GM12878 (cell line): ENCODE measurements at regions of chr2 and their contacts with region 1.

Region 1: GRCh38 chr2:31170071-31170698 is 31.9 kb upstream of the GALNT14 start:
- DNase-seq: peak; percentile 21
- ATAC-seq: peak; percentile 94
- H3K4me3 ChIP-seq: no peak overlapping the region
- H3K27ac ChIP-seq: no peak overlapping the region
- H3K4me1 ChIP-seq: no peaks in the 10 kb centered on the region
- H3K27me3 ChIP-seq: no peaks in the 10 kb centered on the region
- CTCF ChIP-seq: peak; percentile 93 to 97 (median 95)
- EP300 ChIP-seq: no peak
- POLR2A ChIP-seq: no peak
- RAD21 ChIP-seq: peak; percentile 85

Region 2: DNA sequence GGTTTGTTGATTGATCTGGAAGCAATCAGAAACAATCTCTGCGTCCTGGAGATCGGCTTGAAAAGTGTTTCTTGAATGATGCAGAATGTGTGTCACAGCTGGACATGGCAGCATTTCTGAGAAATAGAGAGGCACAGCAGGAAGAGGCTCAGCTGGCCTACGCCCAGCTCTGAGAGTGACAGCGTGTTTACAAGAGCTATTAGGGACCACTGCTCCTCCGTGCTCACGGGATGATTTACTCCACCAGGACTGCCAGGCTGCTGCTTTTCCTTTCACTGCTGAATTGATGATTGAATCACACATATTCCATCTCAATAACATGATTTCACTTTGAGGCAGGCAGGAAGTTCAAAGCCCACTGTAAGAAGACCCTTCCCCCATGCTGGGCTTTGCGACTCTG is 94.7 kb before region 1 on chr2:
- CTCF ChIA-PET with region 1: no interaction called
- POLR2A ChIA-PET with region 1: no interaction called
- RAD21 ChIA-PET with region 1: no interaction called
- SMC1A ChIA-PET with region 1: no interaction called
- in situ Hi-C with region 1: no loop called
- intact Hi-C with region 1: no loop called
- DNase-seq: no peak
- ATAC-seq: no peak
- H3K4me3 ChIP-seq: no peak overlapping the region
- H3K27ac ChIP-seq: no peak overlapping the region
- H3K4me1 ChIP-seq: no peaks in the 10 kb centered on the region
- H3K27me3 ChIP-seq: no peaks in the 10 kb centered on the region
- CTCF ChIP-seq: no peak
- EP300 ChIP-seq: no peak
- POLR2A ChIP-seq: no peak
- RAD21 ChIP-seq: no peak

Region 3: DNA sequence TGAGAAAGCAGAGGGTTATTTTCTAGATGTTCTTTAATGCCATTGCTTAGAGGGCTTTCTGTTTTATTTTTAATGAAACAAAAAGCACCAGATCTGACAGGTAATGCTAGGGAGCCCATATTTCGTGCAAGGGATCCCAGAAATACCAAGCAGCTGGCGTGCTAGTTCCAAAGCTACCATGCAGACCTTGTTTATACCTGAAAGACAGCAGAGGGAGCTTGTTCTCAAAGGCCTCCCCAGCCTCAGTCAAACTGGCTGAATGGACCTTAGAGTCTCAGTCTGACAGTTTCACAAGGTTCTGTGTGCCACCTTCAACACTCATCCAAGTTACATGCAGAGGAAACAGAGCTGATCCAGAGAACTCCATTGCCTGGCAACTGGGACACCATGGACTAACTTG is 80.5 kb before region 1 on chr2:
- CTCF ChIA-PET with region 1: interaction called, 4 read pairs
- POLR2A ChIA-PET with region 1: no interaction called
- RAD21 ChIA-PET with region 1: no interaction called
- SMC1A ChIA-PET with region 1: interaction called, 13 read pairs
- in situ Hi-C with region 1: no loop called
- intact Hi-C with region 1: no loop called
- DNase-seq: no peak
- ATAC-seq: no peak
- H3K4me3 ChIP-seq: no peak overlapping the region
- H3K27ac ChIP-seq: no peak overlapping the region
- H3K4me1 ChIP-seq: no peaks in the 10 kb centered on the region
- H3K27me3 ChIP-seq: no peaks in the 10 kb centered on the region
- CTCF ChIP-seq: no peak
- EP300 ChIP-seq: no peak
- POLR2A ChIP-seq: no peak
- RAD21 ChIP-seq: 0 out of 2 replicates have a peak, but pooled peaks have one; percentile 3

Region 4: DNA sequence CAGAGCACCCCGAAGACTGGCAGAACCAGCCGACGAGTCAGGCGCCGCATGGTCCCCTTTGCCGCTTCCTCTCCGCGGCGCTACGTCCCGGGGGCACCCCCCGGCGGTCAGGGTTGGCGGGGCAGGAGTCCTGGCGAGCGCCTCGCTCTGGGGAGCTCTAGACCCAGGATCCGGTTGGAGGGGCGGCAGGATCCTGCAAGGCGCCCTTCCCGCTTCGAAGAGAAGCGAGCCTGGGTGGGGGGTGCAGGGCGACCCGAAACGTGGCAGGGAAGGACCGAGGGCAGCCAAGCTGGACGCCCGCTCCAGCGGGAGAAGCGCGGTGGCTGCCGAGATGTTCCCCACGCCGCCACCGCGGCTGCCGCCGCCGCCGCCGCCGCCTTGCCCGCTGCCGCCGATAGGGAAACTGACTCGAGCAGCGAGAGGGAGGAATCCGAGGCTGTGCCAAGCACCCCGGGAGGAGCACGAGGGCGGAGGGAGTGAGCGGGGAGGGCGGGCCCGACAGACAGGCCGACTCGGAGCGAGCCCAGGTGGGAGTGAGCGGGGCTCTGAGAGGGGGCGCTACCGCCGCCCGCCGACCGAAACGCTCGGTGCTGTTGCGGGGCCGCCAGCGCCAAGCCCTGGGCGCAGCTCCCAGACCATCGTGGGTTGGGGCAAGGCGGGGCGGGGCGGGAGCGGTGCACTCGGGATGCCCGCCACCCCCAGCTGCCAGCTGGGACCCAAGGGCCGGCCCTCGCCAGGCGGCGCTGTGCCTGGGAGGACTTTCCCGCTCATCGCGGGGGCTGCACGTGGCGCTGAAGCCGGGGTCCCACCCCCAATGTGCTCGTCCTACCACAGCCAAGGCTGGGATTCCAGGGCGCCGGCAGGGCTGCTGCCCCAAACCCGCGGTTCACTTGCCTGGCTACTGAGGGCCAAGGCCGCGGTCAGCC is 31.9 kb before region 1 on chr2 and contains the start of gene GALNT14:
- CTCF ChIA-PET with region 1: interaction called, 16 read pairs
- POLR2A ChIA-PET with region 1: no interaction called
- RAD21 ChIA-PET with region 1: interaction called, 6 read pairs
- SMC1A ChIA-PET with region 1: interaction called, 5 read pairs
- in situ Hi-C with region 1: no loop called
- intact Hi-C with region 1: no loop called
- DNase-seq: no peak
- ATAC-seq: peak; percentile 82
- H3K4me3 ChIP-seq: peak within 1 kb of the TSS; percentile 32; the same call in 1 of the 2 replicates
- H3K27ac ChIP-seq: no peak within 1 kb of the TSS
- H3K4me1 ChIP-seq: no peaks in the 10 kb centered on the region; the same call in 1 of the 2 replicates
- H3K27me3 ChIP-seq: peaks cover 2 to 27% of the 10 kb centered on the region in 2 experiments
- CTCF ChIP-seq: peak; percentile 25 to 50 (median 41); a peak in 4 of 6 replicates
- EP300 ChIP-seq: no peak
- POLR2A ChIP-seq: no peak
- RAD21 ChIP-seq: no peak
- polyA plus RNA-seq, gene GALNT14: 3.7 to 4.1 TPM

Region 5: GRCh38 chr2:31192851-31193392 is 22.7 kb after region 1 on chr2:
- CTCF ChIA-PET with region 1: interaction called, 11 read pairs
- POLR2A ChIA-PET with region 1: no interaction called
- RAD21 ChIA-PET with region 1: no interaction called
- SMC1A ChIA-PET with region 1: interaction called, 9 read pairs
- in situ Hi-C with region 1: no loop called
- intact Hi-C with region 1: no loop called
- DNase-seq: no peak
- ATAC-seq: no peak
- H3K4me3 ChIP-seq: no peak overlapping the region
- H3K27ac ChIP-seq: no peak overlapping the region
- H3K4me1 ChIP-seq: no peaks in the 10 kb centered on the region
- H3K27me3 ChIP-seq: no peaks in the 10 kb centered on the region
- CTCF ChIP-seq: no peak
- EP300 ChIP-seq: no peak
- POLR2A ChIP-seq: no peak
- RAD21 ChIP-seq: no peak

Region 6: DNA sequence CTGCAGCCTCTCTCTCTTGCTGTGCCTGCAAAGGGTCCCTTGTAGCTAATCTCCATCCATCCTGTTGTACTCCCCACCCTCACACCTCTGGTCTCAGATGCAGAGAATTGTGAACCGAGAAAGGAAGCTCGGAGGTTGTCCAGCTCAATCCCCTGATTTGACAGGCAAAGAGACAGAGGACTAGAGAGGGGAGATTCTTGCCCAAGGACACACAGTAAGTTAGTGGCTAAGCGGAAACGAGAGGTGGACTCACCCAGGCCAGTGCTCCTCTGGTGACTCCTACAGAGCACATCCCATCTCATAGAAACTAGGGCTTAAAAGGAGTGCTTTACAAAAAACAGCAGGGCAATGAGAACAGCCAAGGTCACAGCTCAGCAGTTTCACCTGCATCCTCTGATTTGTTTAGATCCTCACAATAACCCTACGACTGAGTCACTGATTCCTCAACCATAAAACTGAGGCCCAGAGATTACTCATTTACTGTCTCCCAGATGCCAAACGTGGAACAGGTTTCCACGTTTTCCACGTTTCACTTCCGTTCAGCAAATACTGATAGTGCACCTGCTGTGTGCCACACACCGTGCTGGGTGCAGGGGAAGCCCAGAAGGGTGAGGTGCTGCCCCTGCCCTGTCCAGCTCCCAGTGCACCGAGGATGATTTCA is 85.9 kb after region 1 on chr2:
- CTCF ChIA-PET with region 1: interaction called, 39 read pairs
- POLR2A ChIA-PET with region 1: no interaction called
- RAD21 ChIA-PET with region 1: interaction called, 11 read pairs
- SMC1A ChIA-PET with region 1: interaction called, 22 read pairs
- in situ Hi-C with region 1: no loop called
- intact Hi-C with region 1: loop called (anchors 5 kb)
- DNase-seq: peak; percentile 72
- ATAC-seq: peak; percentile 60
- H3K4me3 ChIP-seq: no peak overlapping the region
- H3K27ac ChIP-seq: peak overlapping the region; percentile 27
- H3K4me1 ChIP-seq: peaks cover 77% of the 10 kb centered on the region
- H3K27me3 ChIP-seq: no peaks in the 10 kb centered on the region
- CTCF ChIP-seq: no peak
- EP300 ChIP-seq: peak in 1 of 2 experiments; percentile 76; a peak in 2 of 4 replicates
- POLR2A ChIP-seq: no peak
- RAD21 ChIP-seq: no peak

Region 7: DNA sequence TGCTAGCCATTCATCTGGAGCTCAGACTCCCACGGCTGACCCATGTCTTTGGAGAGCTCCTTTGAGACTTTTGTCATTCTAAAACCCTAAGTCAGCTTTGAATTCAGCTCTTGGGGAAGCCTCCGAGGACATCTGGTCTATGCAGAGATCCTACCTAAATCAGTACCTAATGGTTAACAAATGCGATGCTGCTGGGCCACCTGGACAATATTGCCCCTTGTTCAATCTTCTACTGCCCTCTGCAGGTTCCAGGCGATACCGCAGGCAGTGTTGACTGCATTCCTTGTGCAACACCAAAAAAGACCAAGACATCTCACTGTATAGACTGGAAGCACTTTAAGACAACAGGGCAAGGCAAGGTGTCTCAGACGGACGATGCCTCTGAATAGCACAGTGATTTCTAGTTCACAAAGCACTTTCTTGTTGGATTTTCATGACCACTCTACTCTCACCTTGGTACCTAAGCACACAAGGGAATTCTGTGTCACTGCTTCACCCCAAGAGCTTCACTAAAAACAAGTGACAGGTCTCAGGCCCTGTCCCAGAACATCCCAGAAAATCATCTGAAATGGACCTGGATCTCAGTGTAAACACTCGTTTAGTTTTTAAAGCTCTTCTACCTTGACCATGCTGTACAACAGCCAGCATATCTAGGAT is 163.5 kb after region 1 on chr2:
- CTCF ChIA-PET with region 1: interaction called, 116 read pairs
- POLR2A ChIA-PET with region 1: no interaction called
- RAD21 ChIA-PET with region 1: interaction called, 62 read pairs
- SMC1A ChIA-PET with region 1: interaction called, 68 read pairs
- in situ Hi-C with region 1: no loop called
- intact Hi-C with region 1: loop called (anchors 1 kb)
- DNase-seq: peak; percentile 24
- ATAC-seq: peak; percentile 98
- H3K4me3 ChIP-seq: no peak overlapping the region
- H3K27ac ChIP-seq: no peak overlapping the region
- H3K4me1 ChIP-seq: no peaks in the 10 kb centered on the region
- H3K27me3 ChIP-seq: peaks cover 0 to 3% of the 10 kb centered on the region in 2 experiments; a peak in 1 of 4 replicates
- CTCF ChIP-seq: peak; percentile 96 to 98 (median 97)
- EP300 ChIP-seq: no peak
- POLR2A ChIP-seq: no peak
- RAD21 ChIP-seq: peak; percentile 99